Psoas muscle (tissue), 8 donors: ENCODE measurements at regions of chr1 and their contacts with region 1.

Region 1: GRCh38 chr1:44485229-44485933 is 80.3 kb downstream of the RNF220 start:
- DNase-seq: no peak
- ATAC-seq: peak in 3 of 4 donors; percentile 30 to 45 (median 42)
- H3K4me3 ChIP-seq: peak overlapping the region; percentile 4
- H3K27ac ChIP-seq: peak overlapping the region; percentile 52
- H3K4me1 ChIP-seq: peaks cover 9% of the 10 kb centered on the region
- H3K27me3 ChIP-seq: peaks cover 0 to 11% (median 0%) of the 10 kb centered on the region in 3 donors
- CTCF ChIP-seq: no peak

Region 2: DNA sequence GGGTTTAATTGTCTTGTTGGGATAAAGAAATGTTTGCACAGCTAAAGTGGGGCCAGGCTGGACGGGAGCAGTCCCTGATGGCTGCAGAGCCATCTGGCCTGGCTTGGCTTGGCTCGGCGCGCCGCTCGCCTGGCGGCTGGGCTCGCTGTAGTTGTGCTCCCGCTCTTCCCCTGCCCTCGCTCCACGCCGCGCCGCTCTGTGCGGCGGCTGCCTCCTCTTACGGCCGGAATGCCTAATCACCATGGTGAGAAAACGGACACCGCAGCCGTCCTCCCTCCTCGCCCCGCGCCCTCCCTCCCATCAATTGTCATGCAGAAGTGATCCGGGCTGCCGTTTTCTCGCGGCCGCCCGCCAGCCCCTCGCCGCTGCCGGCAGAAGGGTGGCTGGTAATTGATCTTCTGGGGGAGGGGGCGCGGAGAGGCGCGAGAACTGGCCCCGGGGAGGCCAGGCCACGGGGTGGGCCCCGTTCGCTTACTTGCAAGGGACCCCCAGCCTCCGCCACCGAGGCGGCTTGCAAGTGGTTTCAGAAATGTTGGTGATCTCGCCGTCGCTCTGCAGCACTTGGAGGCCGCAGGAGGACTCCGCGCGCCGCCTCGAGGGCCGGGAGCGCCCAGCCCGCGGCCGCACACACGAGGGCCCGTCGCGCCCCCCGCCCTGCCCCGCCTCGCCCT is 67.9 kb before region 1 on chr1:
- intact Hi-C with region 1: loop called in 1 of 2 experiments (anchors 2 kb)
- DNase-seq: peak in 1 of 2 donors; percentile 60
- ATAC-seq: peak; percentile 54 to 82 (median 64)
- H3K4me3 ChIP-seq: peak overlapping the region; percentile 56
- H3K27ac ChIP-seq: no peak overlapping the region
- H3K4me1 ChIP-seq: peaks cover 20% of the 10 kb centered on the region
- H3K27me3 ChIP-seq: peaks cover 9 to 84% (median 21%) of the 10 kb centered on the region in 3 donors
- CTCF ChIP-seq: no peak

Region 3: GRCh38 chr1:44433209-44433608 is 52.2 kb before region 1 on chr1:
- intact Hi-C with region 1: no loop called
- DNase-seq: no peak
- ATAC-seq: no peak
- H3K4me3 ChIP-seq: no peak overlapping the region
- H3K27ac ChIP-seq: no peak overlapping the region
- H3K4me1 ChIP-seq: no peaks in the 10 kb centered on the region
- H3K27me3 ChIP-seq: peaks cover 4 to 19% (median 6%) of the 10 kb centered on the region in 3 donors
- CTCF ChIP-seq: no peak